ENCODE measurements at regions of chr5 and their contacts with region 1.

Region 1: GRCh38 chr5:96962540-96962991 is 26.7 kb downstream of the LNPEP start:
- DNase-seq: no peak
- H3K4me3 ChIP-seq: no peak overlapping the region
- H3K27ac ChIP-seq: peak overlapping the region; percentile 48
- H3K4me1 ChIP-seq: peaks cover 23% of the 10 kb centered on the region
- H3K27me3 ChIP-seq: no peaks in the 10 kb centered on the region
- CTCF ChIP-seq: no peak

Region 2: GRCh38 chr5:96844476-96844990 is 118.0 kb before region 1 on chr5:
- CTCF ChIA-PET with region 1: interaction called, 17 read pairs
- dilution Hi-C with region 1: no loop called
- in situ Hi-C with region 1: no loop called
- intact Hi-C with region 1: no loop called
- DNase-seq: peak; percentile 70
- H3K4me3 ChIP-seq: peak overlapping the region in 1 of 3 experiments; percentile 18
- H3K27ac ChIP-seq: no peak overlapping the region
- H3K4me1 ChIP-seq: peaks cover 10% of the 10 kb centered on the region
- H3K27me3 ChIP-seq: no peaks in the 10 kb centered on the region
- CTCF ChIP-seq: no peak

Region 3: DNA sequence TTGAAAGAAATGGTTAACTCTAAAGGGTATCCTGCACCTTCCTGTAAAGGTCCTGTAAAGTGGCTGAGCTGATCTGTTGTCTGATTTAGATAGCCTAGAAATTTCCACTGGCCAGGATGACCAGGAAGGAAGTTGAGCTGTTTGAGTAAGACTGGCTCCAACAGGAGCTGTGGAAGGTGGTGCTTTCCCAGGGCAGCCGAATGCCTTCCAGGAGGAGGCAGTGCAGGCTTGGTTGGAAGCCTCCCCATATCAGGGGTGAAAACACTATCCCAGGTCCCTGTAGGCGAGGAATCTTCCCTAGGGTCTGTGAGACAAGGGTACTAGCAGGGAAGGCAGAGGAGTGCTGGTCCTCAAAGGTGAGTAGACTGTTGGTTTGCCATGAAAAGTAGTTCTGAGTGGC is 81.5 kb after region 1 on chr5:
- CTCF ChIA-PET with region 1: no interaction called
- dilution Hi-C with region 1: no loop called
- in situ Hi-C with region 1: no loop called
- intact Hi-C with region 1: no loop called
- DNase-seq: peak; percentile 35
- H3K4me3 ChIP-seq: no peak overlapping the region
- H3K27ac ChIP-seq: no peak overlapping the region
- H3K4me1 ChIP-seq: no peaks in the 10 kb centered on the region
- H3K27me3 ChIP-seq: no peaks in the 10 kb centered on the region
- CTCF ChIP-seq: peak; percentile 37 to 42

Measured in mammary epithelial cell (primary cell).